HepG2 (cell line): ENCODE measurements at regions of chr11 and their contacts with region 1.

Region 1: GRCh38 chr11:78798660-78799059 is 224.0 kb upstream of the NARS2 start:
- DNase-seq: peak; percentile 25
- ATAC-seq: peak; percentile 98
- H3K4me3 ChIP-seq: no peak overlapping the region
- H3K27ac ChIP-seq: no peak overlapping the region
- H3K4me1 ChIP-seq: no peaks in the 10 kb centered on the region
- H3K27me3 ChIP-seq: peaks cover 3 to 7% of the 10 kb centered on the region in 2 experiments; a peak in 2 of 5 replicates
- CTCF ChIP-seq: peak; percentile 87
- EP300 ChIP-seq: no peak
- POLR2A ChIP-seq: no peak
- RAD21 ChIP-seq: no peak

Region 2: GRCh38 chr11:78784321-78785061 is 14.2 kb before region 1 on chr11:
- CTCF ChIA-PET with region 1: no interaction called
- POLR2A ChIA-PET with region 1: no interaction called
- in situ Hi-C with region 1: no loop called
- intact Hi-C with region 1: no loop called
- DNase-seq: no peak
- ATAC-seq: no peak
- H3K4me3 ChIP-seq: no peak overlapping the region
- H3K27ac ChIP-seq: no peak overlapping the region
- H3K4me1 ChIP-seq: no peaks in the 10 kb centered on the region
- H3K27me3 ChIP-seq: peaks cover 2 to 8% of the 10 kb centered on the region in 2 experiments; a peak in 3 of 5 replicates
- CTCF ChIP-seq: no peak
- EP300 ChIP-seq: no peak
- POLR2A ChIP-seq: no peak
- RAD21 ChIP-seq: no peak

Region 3: GRCh38 chr11:78825591-78826020 is 26.9 kb after region 1 on chr11:
- CTCF ChIA-PET with region 1: no interaction called
- POLR2A ChIA-PET with region 1: no interaction called
- in situ Hi-C with region 1: no loop called
- intact Hi-C with region 1: no loop called
- DNase-seq: no peak
- ATAC-seq: no peak
- H3K4me3 ChIP-seq: no peak overlapping the region
- H3K27ac ChIP-seq: no peak overlapping the region
- H3K4me1 ChIP-seq: no peaks in the 10 kb centered on the region
- H3K27me3 ChIP-seq: peaks cover 2 to 14% of the 10 kb centered on the region in 2 experiments; a peak in 4 of 5 replicates
- CTCF ChIP-seq: no peak
- EP300 ChIP-seq: no peak
- POLR2A ChIP-seq: no peak
- RAD21 ChIP-seq: no peak

Region 4: GRCh38 chr11:79076526-79077115 is 278.0 kb after region 1 on chr11:
- CTCF ChIA-PET with region 1: interaction called, 4 read pairs
- POLR2A ChIA-PET with region 1: no interaction called
- in situ Hi-C with region 1: no loop called
- intact Hi-C with region 1: loop called (anchors 2 kb)
- DNase-seq: peak; percentile 30
- ATAC-seq: peak; percentile 85
- H3K4me3 ChIP-seq: no peak overlapping the region
- H3K27ac ChIP-seq: no peak overlapping the region
- H3K4me1 ChIP-seq: no peaks in the 10 kb centered on the region
- H3K27me3 ChIP-seq: peaks cover 0 to 4% of the 10 kb centered on the region in 2 experiments; a peak in 2 of 5 replicates
- CTCF ChIP-seq: peak; percentile 71
- EP300 ChIP-seq: no peak
- POLR2A ChIP-seq: no peak
- RAD21 ChIP-seq: 0 out of 2 replicates have a peak, but pooled peaks have one; percentile 19

Region 5: DNA sequence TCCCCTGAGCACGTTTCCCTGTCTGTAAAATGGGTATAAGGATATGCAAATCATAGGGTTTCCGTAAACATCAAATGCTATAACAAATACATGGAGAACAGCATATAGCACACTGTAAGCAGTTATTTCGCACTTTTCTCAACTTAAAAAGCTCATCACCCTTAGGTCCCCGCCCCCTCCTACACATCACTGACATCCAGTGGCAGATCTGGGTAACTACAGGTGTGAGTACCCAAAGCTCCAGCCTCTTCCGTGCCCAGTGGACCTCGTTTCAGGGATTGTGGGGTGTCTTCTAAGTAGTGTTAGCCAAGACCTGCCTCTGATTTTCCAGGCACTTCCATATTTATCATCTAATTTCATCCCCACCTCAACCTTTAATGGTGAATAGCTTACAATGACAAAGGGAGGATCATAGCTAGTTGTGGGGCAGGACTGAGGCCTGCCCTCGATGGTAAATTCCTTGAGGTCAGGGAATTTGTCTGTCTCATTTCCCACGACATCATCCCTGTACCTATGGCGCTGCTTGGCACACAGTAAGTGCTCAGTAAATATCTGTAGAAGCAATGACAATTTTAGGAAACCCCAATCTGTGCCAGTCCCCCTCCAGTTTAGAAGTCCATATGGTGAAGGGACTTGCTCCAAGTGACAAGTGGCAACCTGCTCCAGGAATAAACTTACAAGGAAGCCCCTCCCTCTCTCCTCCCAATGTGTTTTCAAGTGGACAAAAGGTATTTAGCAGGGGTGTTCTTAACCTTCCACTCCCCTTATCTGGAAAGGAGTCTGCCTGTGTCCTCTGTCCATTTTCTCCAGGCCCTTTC is 301.6 kb after region 1 on chr11:
- CTCF ChIA-PET with region 1: no interaction called
- POLR2A ChIA-PET with region 1: no interaction called
- in situ Hi-C with region 1: no loop called
- intact Hi-C with region 1: loop called (anchors 1 kb)
- DNase-seq: peak; percentile 45
- ATAC-seq: peak; percentile 96
- H3K4me3 ChIP-seq: no peak overlapping the region
- H3K27ac ChIP-seq: no peak overlapping the region
- H3K4me1 ChIP-seq: no peaks in the 10 kb centered on the region
- H3K27me3 ChIP-seq: peaks cover 0 to 3% of the 10 kb centered on the region in 2 experiments; a peak in 2 of 5 replicates
- CTCF ChIP-seq: peak; percentile 83
- EP300 ChIP-seq: no peak
- POLR2A ChIP-seq: no peak
- RAD21 ChIP-seq: peak; percentile 50; the same call in 1 of the 2 replicates